ENCODE measurements at regions of chr5 and their contacts with region 1.

Region 1: GRCh38 chr5:113294311-113295110 is 140.3 kb downstream of the TSSK1B start:
- DNase-seq: peak; percentile 90
- ATAC-seq: peak; percentile 97 to 98

Region 2: DNA sequence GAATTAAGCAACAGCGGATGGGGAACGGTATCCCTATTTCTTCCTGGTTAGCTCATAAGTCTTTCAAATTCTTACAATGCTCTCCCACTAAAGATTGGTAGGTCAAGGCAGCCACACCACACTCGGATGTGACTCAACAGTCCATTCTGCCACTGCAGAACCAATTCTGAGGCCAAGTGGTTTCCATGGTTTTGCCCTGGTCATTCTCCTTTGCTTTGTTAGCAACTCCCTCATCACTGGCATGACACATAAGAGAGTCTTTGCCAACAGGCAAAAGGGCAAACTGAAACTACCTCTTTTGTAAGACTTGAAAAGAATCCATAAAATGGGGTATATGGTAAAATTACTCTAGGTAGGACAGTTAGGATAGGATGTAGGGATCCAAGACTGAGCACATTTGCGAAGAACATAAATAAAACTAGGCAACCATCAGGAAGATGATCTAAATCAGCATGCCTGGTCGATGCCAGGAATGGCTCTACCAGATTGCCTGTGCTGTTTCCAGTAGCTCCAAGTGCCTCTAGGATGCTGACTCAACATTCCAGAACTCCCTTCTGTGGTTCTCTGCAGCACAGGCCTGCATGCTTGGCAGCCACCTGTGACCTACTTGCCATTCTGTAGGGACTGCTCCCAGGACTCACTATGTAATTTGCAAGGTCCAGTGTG is 212.5 kb before region 1 on chr5:
- intact Hi-C with region 1: loop called in 1 of 2 experiments (anchors 10 kb)
- DNase-seq: no peak
- ATAC-seq: peak; percentile 65 to 72

Region 3: GRCh38 chr5:113204525-113205161 is 89.9 kb before region 1 on chr5:
- intact Hi-C with region 1: loop called (anchors 5 to 10 kb)
- DNase-seq: peak; percentile 58
- ATAC-seq: peak; percentile 35 to 55

Measured in left cardiac atrium (tissue), 4 donors.